ENCODE measurements at regions of chr10 and their contacts with region 1.

Region 1: DNA sequence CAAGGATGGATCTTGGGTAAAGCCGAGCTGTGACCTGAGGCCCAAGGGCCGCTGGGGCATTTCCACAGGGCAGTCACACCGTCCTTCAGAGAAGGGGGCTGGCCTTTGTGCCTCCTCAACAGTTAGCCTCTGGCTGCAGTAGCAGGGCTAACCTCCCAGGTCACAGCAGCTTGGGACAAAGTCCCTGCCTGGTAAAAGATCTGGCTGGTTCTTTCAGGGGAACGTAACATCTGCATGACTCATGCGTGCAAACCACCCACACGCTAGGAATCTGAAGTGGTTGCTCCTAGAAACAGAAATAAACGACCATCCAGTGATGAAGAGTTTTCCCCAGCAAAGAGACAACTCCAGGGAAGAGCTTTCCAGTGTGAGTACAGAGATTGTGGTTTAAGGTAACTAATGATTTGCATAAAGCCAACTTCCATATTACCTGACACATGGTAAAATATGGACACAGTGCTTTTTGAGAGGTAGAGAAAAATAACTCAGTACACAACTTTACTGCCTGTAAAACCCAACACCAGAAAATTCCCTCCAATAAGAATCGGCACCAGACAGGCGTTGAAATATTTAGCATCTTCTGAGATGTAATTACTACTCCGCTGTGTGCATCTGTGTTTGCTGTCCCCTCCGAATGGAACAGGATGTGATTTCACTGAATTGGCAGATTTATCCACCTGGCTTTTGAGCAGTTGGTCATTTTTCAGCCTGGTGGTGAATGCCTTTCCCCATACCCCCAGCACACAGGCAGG is 84.9 kb upstream of the ADRB1 start:
- DNase-seq: peak in 2 of 14 experiments; percentile 12 to 21
- ATAC-seq: no peak
- H3K4me3 ChIP-seq: no peak overlapping the region
- H3K4me3 Mint-ChIP-seq: no peak overlapping the region
- H3K27ac ChIP-seq: no peak overlapping the region
- H3K27ac Mint-ChIP-seq: no peak overlapping the region
- H3K4me1 ChIP-seq: peaks cover 47% of the 10 kb centered on the region
- H3K4me1 Mint-ChIP-seq: peaks cover 45% of the 10 kb centered on the region
- H3K27me3 ChIP-seq: no peaks in the 10 kb centered on the region
- H3K27me3 Mint-ChIP-seq: peaks cover 11% of the 10 kb centered on the region
- CTCF ChIP-seq: no peak

Region 2: GRCh38 chr10:113644185-113645120 is 314.4 kb before region 1 on chr10:
- CTCF ChIA-PET with region 1: no interaction called
- POLR2A ChIA-PET with region 1: no interaction called
- intact Hi-C with region 1: no loop called
- DNase-seq: no peak
- ATAC-seq: no peak
- H3K4me3 ChIP-seq: no peak overlapping the region
- H3K4me3 Mint-ChIP-seq: no peak overlapping the region
- H3K27ac ChIP-seq: no peak overlapping the region
- H3K27ac Mint-ChIP-seq: no peak overlapping the region
- H3K4me1 ChIP-seq: no peaks in the 10 kb centered on the region
- H3K4me1 Mint-ChIP-seq: no peaks in the 10 kb centered on the region
- H3K27me3 ChIP-seq: peaks cover 3 to 23% of the 10 kb centered on the region in 2 experiments
- H3K27me3 Mint-ChIP-seq: peaks cover 38% of the 10 kb centered on the region
- CTCF ChIP-seq: no peak

Region 3: DNA sequence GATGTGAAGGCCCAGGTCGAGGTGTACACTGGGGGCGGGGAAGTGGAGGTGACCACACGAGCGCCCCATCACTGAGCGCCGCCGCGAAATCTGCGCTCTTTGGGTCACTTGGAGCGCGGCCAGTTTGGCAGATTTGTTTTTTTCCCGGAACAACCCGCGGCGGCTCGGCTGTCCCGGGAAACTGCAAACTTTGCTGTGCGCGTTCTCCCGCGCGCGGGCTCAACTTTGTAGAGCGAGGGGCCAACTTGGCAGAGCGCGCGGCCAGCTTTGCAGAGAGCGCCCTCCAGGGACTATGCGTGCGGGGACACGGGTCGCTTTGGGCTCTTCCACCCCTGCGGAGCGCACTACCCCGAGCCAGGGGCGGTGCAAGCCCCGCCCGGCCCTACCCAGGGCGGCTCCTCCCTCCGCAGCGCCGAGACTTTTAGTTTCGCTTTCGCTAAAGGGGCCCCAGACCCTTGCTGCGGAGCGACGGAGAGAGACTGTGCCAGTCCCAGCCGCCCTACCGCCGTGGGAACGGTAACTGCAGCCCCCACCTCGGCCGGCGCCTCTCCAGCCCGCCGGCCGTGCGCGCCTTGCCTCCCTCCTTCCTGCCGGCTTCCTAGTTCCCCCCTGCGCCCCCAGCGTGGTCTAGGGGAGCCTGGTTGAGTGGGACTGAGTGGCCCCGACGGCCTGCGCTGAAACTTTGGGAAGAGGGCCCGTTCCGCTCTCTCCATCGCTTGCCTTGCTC is 279.2 kb before region 1 on chr10 and contains the start of gene CASP7:
- CTCF ChIA-PET with region 1: no interaction called
- POLR2A ChIA-PET with region 1: no interaction called
- intact Hi-C with region 1: loop called in 1 of 2 experiments (anchors 10 kb)
- DNase-seq: peak; percentile 57 to 91 (median 70)
- ATAC-seq: peak; percentile 85
- H3K4me3 ChIP-seq: peak within 1 kb of the TSS; percentile 77
- H3K4me3 Mint-ChIP-seq: peak within 1 kb of the TSS; percentile 98
- H3K27ac ChIP-seq: peak within 1 kb of the TSS; percentile 59 to 75
- H3K27ac Mint-ChIP-seq: peak within 1 kb of the TSS; percentile 88
- H3K4me1 ChIP-seq: peaks cover 25% of the 10 kb centered on the region
- H3K4me1 Mint-ChIP-seq: peaks cover 32% of the 10 kb centered on the region
- H3K27me3 ChIP-seq: no peaks in the 10 kb centered on the region
- H3K27me3 Mint-ChIP-seq: no peaks in the 10 kb centered on the region
- CTCF ChIP-seq: peak; percentile 8
- total RNA-seq, gene CASP7: 8.5 to 8.6 TPM

Region 4: GRCh38 chr10:113854011-113854760 is 104.6 kb before region 1 on chr10 and contains the starts of genes DCLRE1A and NHLRC2:
- CTCF ChIA-PET with region 1: no interaction called
- POLR2A ChIA-PET with region 1: interaction called, 5 read pairs
- intact Hi-C with region 1: loop called in 1 of 2 experiments (anchors 5 kb)
- DNase-seq: peak; percentile 32 to 79 (median 54)
- ATAC-seq: peak; percentile 47
- H3K4me3 ChIP-seq: peak within 1 kb of the TSS; percentile 84
- H3K4me3 Mint-ChIP-seq: peak within 1 kb of the TSS; percentile 99
- H3K27ac ChIP-seq: peak within 1 kb of the TSS; percentile 42 to 51
- H3K27ac Mint-ChIP-seq: peak within 1 kb of the TSS; percentile 90
- H3K4me1 ChIP-seq: peaks cover 23% of the 10 kb centered on the region
- H3K4me1 Mint-ChIP-seq: peaks cover 59% of the 10 kb centered on the region
- H3K27me3 ChIP-seq: no peaks in the 10 kb centered on the region
- H3K27me3 Mint-ChIP-seq: no peaks in the 10 kb centered on the region
- CTCF ChIP-seq: no peak
- total RNA-seq, gene DCLRE1A: 0.36 to 0.47 TPM
- total RNA-seq, gene NHLRC2: 4.6 TPM

Region 5: DNA sequence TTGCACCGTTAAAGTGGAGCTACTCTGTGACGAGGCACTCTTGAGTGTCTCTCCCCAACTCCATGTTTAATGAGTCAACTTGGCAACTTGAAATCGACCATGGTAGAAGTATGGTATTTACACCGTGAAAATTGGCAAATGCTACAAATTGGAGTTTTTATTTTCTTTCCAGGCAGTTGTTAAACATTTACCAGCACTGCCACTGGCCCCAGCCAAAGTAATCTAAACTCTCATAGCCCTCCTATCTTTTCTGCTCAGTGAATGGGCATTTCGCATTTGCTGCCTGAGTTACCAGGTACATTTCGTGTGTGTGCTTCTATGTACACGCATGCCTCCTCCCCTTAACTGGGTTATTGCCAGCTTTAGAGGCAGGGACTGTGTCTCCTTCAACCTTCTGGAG is 21.1 kb before region 1 on chr10:
- CTCF ChIA-PET with region 1: no interaction called
- POLR2A ChIA-PET with region 1: no interaction called
- intact Hi-C with region 1: no loop called
- DNase-seq: no peak
- ATAC-seq: no peak
- H3K4me3 ChIP-seq: no peak overlapping the region
- H3K4me3 Mint-ChIP-seq: no peak overlapping the region
- H3K27ac ChIP-seq: no peak overlapping the region
- H3K27ac Mint-ChIP-seq: no peak overlapping the region
- H3K4me1 ChIP-seq: no peaks in the 10 kb centered on the region
- H3K4me1 Mint-ChIP-seq: no peaks in the 10 kb centered on the region
- H3K27me3 ChIP-seq: no peaks in the 10 kb centered on the region
- H3K27me3 Mint-ChIP-seq: no peaks in the 10 kb centered on the region
- CTCF ChIP-seq: no peak

Region 6: DNA sequence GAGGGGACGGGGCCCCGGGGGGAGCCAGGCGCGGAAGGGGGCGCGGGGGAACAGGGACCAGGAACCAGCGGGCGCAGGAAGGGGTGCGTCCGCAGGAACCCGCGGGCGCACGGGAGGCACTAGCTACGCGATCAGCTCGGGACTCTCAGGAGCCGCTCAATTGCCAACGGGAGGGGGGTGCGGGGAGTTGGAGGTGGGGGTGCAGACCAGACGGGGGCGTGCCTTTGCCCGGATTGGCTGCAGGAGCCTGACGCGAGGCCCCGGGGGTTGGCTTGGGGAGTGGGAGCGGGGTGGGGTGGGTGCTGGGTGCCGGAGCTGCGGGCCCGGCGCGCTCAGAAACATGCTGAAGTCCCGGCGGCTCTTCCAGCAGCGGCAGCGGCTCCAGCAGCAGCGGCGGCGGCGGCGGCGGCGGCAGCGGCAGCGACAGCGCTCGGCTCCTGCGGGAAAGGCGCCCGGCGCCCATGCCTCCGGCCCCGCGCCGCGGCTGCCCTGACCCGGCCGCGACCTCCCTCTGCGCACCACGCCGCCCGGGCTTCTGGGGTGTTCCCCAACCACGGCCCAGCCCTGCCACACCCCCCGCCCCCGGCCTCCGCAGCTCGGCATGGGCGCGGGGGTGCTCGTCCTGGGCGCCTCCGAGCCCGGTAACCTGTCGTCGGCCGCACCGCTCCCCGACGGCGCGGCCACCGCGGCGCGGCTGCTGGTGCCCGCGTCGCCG is 84.9 kb after region 1 on chr10 and contains the start of gene ADRB1:
- CTCF ChIA-PET with region 1: no interaction called
- POLR2A ChIA-PET with region 1: interaction called, 3 read pairs
- intact Hi-C with region 1: loop called in 1 of 2 experiments (anchors 5 kb)
- DNase-seq: peak in 8 of 14 experiments; percentile 7 to 61 (median 34)
- ATAC-seq: peak; percentile 39
- H3K4me3 ChIP-seq: peak within 1 kb of the TSS; percentile 29
- H3K4me3 Mint-ChIP-seq: peak within 1 kb of the TSS; percentile 78
- H3K27ac ChIP-seq: no peak within 1 kb of the TSS
- H3K27ac Mint-ChIP-seq: no peak within 1 kb of the TSS
- H3K4me1 ChIP-seq: peaks cover 23% of the 10 kb centered on the region
- H3K4me1 Mint-ChIP-seq: peaks cover 7% of the 10 kb centered on the region
- H3K27me3 ChIP-seq: peaks cover 36 to 62% of the 10 kb centered on the region in 2 experiments
- H3K27me3 Mint-ChIP-seq: peaks cover 72% of the 10 kb centered on the region
- CTCF ChIP-seq: no peak
- total RNA-seq, gene ADRB1: 0.08 to 0.11 TPM

Region 7: GRCh38 chr10:114095559-114096337 is 136.9 kb after region 1 on chr10:
- CTCF ChIA-PET with region 1: no interaction called
- POLR2A ChIA-PET with region 1: no interaction called
- intact Hi-C with region 1: loop called in 1 of 2 experiments (anchors 5 kb)
- DNase-seq: peak in 1 of 14 experiments; percentile 54
- ATAC-seq: peak; percentile 48
- H3K4me3 ChIP-seq: no peak overlapping the region
- H3K4me3 Mint-ChIP-seq: peak overlapping the region; percentile 39
- H3K27ac ChIP-seq: no peak overlapping the region
- H3K27ac Mint-ChIP-seq: no peak overlapping the region
- H3K4me1 ChIP-seq: peaks cover 26% of the 10 kb centered on the region
- H3K4me1 Mint-ChIP-seq: peaks cover 46% of the 10 kb centered on the region
- H3K27me3 ChIP-seq: peaks cover 4 to 6% of the 10 kb centered on the region in 2 experiments
- H3K27me3 Mint-ChIP-seq: peaks cover 21% of the 10 kb centered on the region
- CTCF ChIP-seq: no peak

Region 8: GRCh38 chr10:114223066-114223465 is 264.3 kb after region 1 on chr10:
- CTCF ChIA-PET with region 1: no interaction called
- POLR2A ChIA-PET with region 1: no interaction called
- intact Hi-C with region 1: no loop called
- DNase-seq: no peak
- ATAC-seq: no peak
- H3K4me3 ChIP-seq: no peak overlapping the region
- H3K4me3 Mint-ChIP-seq: no peak overlapping the region
- H3K27ac ChIP-seq: no peak overlapping the region
- H3K27ac Mint-ChIP-seq: no peak overlapping the region
- H3K4me1 ChIP-seq: no peaks in the 10 kb centered on the region
- H3K4me1 Mint-ChIP-seq: no peaks in the 10 kb centered on the region
- H3K27me3 ChIP-seq: peaks cover 0 to 4% of the 10 kb centered on the region in 2 experiments
- H3K27me3 Mint-ChIP-seq: peaks cover 27% of the 10 kb centered on the region
- CTCF ChIP-seq: no peak